Activated CD4-positive, alpha-beta T cell treated with anti-CD3 and anti-CD28 coated beads for 36 hours (primary cell): ENCODE measurements at regions of chr9 and their contacts with region 1.

Region 1: DNA sequence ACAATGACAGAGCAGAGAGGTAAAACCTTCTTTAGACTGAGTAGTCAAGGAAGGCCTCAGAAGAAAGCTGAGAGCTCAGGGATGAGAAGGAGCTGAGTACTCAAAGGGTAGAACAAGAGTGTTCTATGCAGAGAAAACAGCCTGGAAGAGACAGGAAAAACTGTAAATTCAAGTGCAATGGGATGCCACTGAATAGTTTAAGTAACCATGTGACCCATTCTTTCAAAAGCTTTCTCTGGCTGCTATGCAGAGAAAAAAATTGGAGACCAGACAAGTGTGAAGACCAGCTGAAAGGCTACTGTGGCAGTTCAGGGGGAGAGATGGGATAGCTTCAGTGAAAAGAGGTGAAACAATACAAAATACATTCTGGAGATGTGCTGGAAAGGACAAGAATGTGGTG is 61.3 kb upstream of the RNF38 start:
- DNase-seq: no peak
- ATAC-seq: no peak
- H3K4me3 Mint-ChIP-seq: no peak overlapping the region
- H3K27ac Mint-ChIP-seq: no peak overlapping the region
- H3K4me1 Mint-ChIP-seq: peaks cover 56% of the 10 kb centered on the region
- H3K27me3 Mint-ChIP-seq: no peaks in the 10 kb centered on the region

Region 2: GRCh38 chr9:36436909-36437308 is 24.4 kb before region 1 on chr9:
- CTCF ChIA-PET with region 1: no interaction called
- POLR2A ChIA-PET with region 1: interaction called, 10 read pairs
- intact Hi-C with region 1: no loop called
- DNase-seq: no peak
- ATAC-seq: no peak
- H3K4me3 Mint-ChIP-seq: no peak overlapping the region
- H3K27ac Mint-ChIP-seq: no peak overlapping the region
- H3K4me1 Mint-ChIP-seq: peaks cover 13% of the 10 kb centered on the region
- H3K27me3 Mint-ChIP-seq: no peaks in the 10 kb centered on the region